PC-9 (cell line): ENCODE measurements at regions of chr2 and their contacts with region 1.

Region 1: GRCh38 chr2:137123226-137123625 is 357.9 kb downstream of the THSD7B start:
- DNase-seq: no peak
- H3K4me3 ChIP-seq: no peak overlapping the region
- H3K27ac ChIP-seq: no peak overlapping the region
- H3K4me1 ChIP-seq: no peaks in the 10 kb centered on the region
- H3K27me3 ChIP-seq: no peaks in the 10 kb centered on the region
- CTCF ChIP-seq: no peak

Region 2: DNA sequence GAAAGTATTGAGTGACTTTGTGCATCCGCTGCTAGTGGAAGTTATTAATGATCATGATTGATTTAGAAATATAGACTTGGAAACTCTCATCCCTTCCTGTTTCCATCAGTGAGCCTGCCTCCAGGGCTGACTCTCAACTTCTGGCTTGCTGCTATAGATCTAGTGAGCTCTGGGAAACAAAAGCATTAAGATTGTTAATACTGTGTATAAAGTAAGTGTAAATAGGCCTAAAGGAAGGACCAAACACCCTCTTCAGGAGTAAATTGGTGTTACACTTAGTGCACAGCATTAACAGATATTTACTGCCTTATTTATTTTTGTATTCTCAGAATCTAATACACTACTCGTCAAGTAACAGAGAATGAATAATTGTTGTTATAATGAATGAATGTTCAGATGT is 72.3 kb before region 1 on chr2:
- CTCF ChIA-PET with region 1: no interaction called
- POLR2A ChIA-PET with region 1: no interaction called
- intact Hi-C with region 1: loop called (anchors 2 kb)
- DNase-seq: no peak
- H3K4me3 ChIP-seq: no peak overlapping the region
- H3K27ac ChIP-seq: no peak overlapping the region
- H3K4me1 ChIP-seq: no peaks in the 10 kb centered on the region
- H3K27me3 ChIP-seq: no peaks in the 10 kb centered on the region; the same call in 1 of the 2 replicates
- CTCF ChIP-seq: peak; percentile 50

Region 3: DNA sequence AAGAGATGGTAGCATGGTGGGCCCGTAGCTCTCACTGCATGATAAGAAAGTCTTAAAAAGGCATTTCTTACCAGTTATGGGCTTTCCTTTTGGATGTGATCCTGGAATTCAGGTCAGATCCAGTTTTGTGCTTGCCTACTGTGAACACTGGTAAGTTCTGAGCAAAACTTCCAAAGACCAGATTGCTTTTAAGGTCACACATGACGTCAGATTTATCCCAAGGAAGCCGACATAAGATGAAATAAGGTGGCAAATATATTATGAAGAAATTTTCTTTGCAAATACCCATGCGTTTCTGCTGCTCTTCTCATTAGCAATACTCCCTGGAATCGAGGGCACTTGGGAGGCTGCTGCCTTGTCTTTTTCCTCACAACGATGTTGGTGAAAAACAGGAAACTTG is 424.6 kb after region 1 on chr2:
- CTCF ChIA-PET with region 1: no interaction called
- POLR2A ChIA-PET with region 1: no interaction called
- intact Hi-C with region 1: no loop called
- DNase-seq: no peak
- H3K4me3 ChIP-seq: no peak overlapping the region
- H3K27ac ChIP-seq: no peak overlapping the region
- H3K4me1 ChIP-seq: no peaks in the 10 kb centered on the region
- H3K27me3 ChIP-seq: no peaks in the 10 kb centered on the region
- CTCF ChIP-seq: no peak